Thyroid gland (tissue), 4 donors: ENCODE measurements at regions of chr3 and their contacts with region 1.

Region 1: DNA sequence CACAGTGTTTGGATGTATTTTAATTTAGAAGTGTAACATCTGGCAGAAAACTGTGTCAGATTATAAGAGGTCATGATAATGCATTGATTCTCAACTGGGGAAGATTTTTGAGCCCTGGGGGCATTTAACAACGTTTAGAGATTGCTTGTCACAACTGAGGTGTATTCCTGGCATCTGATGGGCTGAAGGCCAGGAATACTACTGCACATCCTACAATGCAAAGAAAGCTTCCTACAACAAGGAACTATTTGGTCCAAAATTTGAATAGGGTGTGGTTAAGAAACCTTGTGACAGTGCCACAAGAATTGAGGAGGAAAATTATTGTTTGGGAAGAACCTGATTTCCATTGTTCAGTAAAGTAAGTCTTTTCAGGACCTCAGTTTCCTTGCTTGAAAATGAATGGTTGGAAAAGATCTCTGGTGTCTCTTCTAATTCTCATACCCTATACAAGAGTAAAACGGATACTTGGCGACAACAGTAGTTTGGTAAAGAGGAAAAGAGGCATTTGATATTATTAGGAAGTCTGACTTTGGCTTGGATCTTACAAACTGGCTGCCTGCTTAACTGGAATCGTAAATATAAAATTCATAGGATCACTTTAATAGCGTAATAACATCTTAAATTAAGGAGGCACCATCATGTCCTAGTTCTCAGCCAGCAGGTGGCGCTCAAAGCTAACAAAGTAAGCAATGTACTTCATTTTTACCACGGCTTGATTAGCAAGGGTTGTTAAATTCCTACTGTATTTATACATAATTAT is 4.3 kb downstream of the DAZL start:
- DNase-seq: peak; percentile 79 to 86
- H3K4me3 ChIP-seq: no peak overlapping the region
- H3K27ac ChIP-seq: no peak overlapping the region
- H3K4me1 ChIP-seq: no peaks in the 10 kb centered on the region
- H3K27me3 ChIP-seq: no peaks in the 10 kb centered on the region
- CTCF ChIP-seq: peak; percentile 52 to 84 (median 79)
- POLR2A ChIP-seq: no peak

Region 2: DNA sequence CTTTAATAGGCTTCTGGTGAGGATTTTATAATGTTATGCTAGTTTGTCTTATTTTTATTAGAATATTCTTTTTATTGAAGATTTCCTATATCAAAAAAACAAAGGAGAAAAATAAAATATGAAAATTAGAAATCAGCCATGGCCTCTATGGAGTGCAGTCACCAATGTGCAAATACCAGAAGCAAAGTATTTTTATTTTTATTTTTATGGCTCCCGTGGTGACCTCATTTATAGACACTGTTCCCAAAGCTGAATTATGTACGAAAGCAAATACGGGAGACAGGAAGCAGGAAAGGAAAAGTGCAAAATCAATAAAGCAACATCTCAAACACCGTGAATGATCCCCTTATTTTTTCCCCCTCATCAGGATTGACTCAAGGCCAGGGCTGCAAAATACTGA is 30.8 kb before region 1 on chr3:
- intact Hi-C with region 1: no loop called
- DNase-seq: no peak
- H3K4me3 ChIP-seq: no peak overlapping the region
- H3K27ac ChIP-seq: no peak overlapping the region
- H3K4me1 ChIP-seq: no peaks in the 10 kb centered on the region
- H3K27me3 ChIP-seq: no peaks in the 10 kb centered on the region
- CTCF ChIP-seq: no peak
- POLR2A ChIP-seq: no peak

Region 3: GRCh38 chr3:17032407-17033034 is 431.6 kb after region 1 on chr3:
- intact Hi-C with region 1: loop called (anchors 5 kb)
- DNase-seq: no peak
- H3K4me3 ChIP-seq: no peak overlapping the region
- H3K27ac ChIP-seq: no peak overlapping the region
- H3K4me1 ChIP-seq: no peaks in the 10 kb centered on the region
- H3K27me3 ChIP-seq: no peaks in the 10 kb centered on the region
- CTCF ChIP-seq: peak in 5 of 6 experiments; percentile 24 to 61 (median 49)
- POLR2A ChIP-seq: no peak

Region 4: DNA sequence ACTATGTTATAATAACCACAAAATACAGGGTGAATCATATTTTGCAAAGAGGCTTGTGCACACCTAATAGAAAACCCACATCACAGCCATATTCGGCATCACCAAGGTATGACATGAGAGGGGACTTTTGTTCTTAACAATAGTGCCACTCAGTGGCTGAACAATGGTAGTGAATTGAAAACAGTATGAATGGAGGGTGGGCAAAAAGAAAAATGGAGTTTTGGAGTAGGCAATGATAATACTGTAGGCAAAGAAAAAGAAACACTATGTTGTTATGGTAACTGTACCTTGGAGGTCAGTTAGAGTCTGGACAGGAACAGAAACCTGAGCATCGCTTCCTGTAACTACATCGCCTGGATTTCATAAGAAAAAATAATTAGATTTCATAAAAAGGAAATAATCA is 632.4 kb after region 1 on chr3:
- intact Hi-C with region 1: loop called (anchors 5 kb)
- DNase-seq: no peak
- H3K4me3 ChIP-seq: no peak overlapping the region
- H3K27ac ChIP-seq: no peak overlapping the region
- H3K4me1 ChIP-seq: peaks cover 0 to 6% of the 10 kb centered on the region in 2 donors
- H3K27me3 ChIP-seq: no peaks in the 10 kb centered on the region
- CTCF ChIP-seq: peak; percentile 6 to 58 (median 42)
- POLR2A ChIP-seq: no peak

Region 5: GRCh38 chr3:17412950-17413530 is 812.1 kb after region 1 on chr3:
- intact Hi-C with region 1: loop called (anchors 10 kb)
- DNase-seq: no peak
- H3K4me3 ChIP-seq: no peak overlapping the region
- H3K27ac ChIP-seq: no peak overlapping the region
- H3K4me1 ChIP-seq: no peaks in the 10 kb centered on the region
- H3K27me3 ChIP-seq: no peaks in the 10 kb centered on the region
- CTCF ChIP-seq: peak; percentile 57 to 78 (median 73)
- POLR2A ChIP-seq: no peak